K562 (cell line): ENCODE measurements at regions of chr4 and their contacts with region 1.

Region 1: DNA sequence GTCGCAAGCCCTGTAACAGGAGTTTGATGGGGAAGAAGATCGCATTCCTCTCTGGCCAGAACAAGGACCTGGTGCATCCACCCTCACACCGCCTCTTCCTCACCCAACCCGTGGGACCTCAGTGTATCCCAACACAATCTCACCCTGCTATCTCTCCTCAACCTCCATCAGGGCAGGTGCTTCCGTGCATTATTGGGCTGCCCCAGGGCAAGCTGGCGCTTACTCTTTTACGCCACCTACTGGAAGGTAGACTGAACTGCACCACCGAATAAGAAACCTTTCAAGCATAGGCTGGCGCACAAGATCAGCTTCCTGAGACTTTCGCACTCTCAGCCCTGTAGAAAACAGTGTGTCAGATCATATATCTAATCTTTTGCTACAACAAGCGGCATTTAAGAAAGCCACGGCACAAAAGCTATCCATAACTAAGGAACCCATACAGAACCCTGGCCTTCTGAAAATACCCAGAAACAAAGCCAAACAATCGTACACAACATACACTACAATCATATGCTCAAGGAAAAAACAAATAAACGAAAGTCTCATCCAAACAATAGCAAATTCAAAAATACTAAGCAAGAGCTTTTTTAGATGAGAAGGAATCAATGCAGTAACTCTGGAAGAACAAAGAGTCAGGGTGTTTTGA is 209.3 kb downstream of the UGT8 start:
- DNase-seq: peak; percentile 41 to 62 (median 48)
- ATAC-seq: peak; percentile 87
- H3K4me3 ChIP-seq: no peak overlapping the region
- H3K27ac ChIP-seq: no peak overlapping the region
- H3K4me1 ChIP-seq: no peaks in the 10 kb centered on the region
- H3K27me3 ChIP-seq: no peaks in the 10 kb centered on the region
- CTCF ChIP-seq: peak; percentile 58 to 73 (median 61)
- EP300 ChIP-seq: no peak
- POLR2A ChIP-seq: no peak
- RAD21 ChIP-seq: peak in 1 of 2 experiments; percentile 39; a peak in 1 of 4 replicates

Region 2: GRCh38 chr4:114734594-114734993 is 73.3 kb before region 1 on chr4:
- CTCF ChIA-PET with region 1: no interaction called
- POLR2A ChIA-PET with region 1: no interaction called
- in situ Hi-C with region 1: no loop called
- intact Hi-C with region 1: loop called (anchors 2 kb)
- DNase-seq: no peak
- ATAC-seq: no peak
- H3K4me3 ChIP-seq: no peak overlapping the region
- H3K27ac ChIP-seq: no peak overlapping the region
- H3K4me1 ChIP-seq: no peaks in the 10 kb centered on the region
- H3K27me3 ChIP-seq: no peaks in the 10 kb centered on the region
- CTCF ChIP-seq: no peak
- EP300 ChIP-seq: no peak
- POLR2A ChIP-seq: no peak
- RAD21 ChIP-seq: no peak